Upper lobe of right lung (tissue), 1 donor: ENCODE measurements at regions of chr4 and their contacts with region 1.

Region 1: GRCh38 chr4:118981839-118982381 is 93.3 kb downstream of the SYNPO2 start:
- DNase-seq: no peak
- ATAC-seq: peak; percentile 96
- H3K4me3 ChIP-seq: no peak overlapping the region
- H3K27ac ChIP-seq: no peak overlapping the region
- H3K4me1 ChIP-seq: no peaks in the 10 kb centered on the region
- H3K27me3 ChIP-seq: no peaks in the 10 kb centered on the region
- CTCF ChIP-seq: peak; percentile 76

Region 2: DNA sequence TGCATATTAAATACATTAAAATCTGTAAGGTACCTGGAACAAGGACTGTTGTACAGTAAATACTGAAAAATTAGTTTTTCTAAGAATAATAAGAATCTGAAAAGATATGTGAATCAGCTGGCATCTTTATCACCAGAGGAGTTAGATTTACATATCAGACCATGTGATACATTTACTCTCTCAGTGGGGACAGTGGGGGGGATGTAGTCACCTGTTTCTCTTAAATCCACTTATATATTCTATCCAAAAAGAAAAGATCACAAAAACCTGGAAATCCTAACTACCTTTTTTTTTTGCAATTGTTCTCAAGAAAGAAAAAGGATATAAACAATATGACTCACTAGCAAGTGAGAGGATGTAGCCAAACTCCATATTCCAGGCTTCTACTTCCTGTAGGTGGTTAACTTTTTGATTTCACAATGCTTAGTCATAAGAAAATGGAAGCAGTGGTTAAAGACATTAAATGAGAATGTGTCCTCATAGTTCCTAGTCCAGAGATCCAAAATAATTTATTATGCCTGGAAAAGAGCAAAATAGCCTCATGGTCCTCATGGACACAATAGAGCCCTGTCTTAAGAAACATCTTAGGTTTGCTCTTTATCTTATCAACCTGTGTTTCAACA is 131.2 kb after region 1 on chr4:
- intact Hi-C with region 1: no loop called
- DNase-seq: no peak
- ATAC-seq: peak; percentile 79
- H3K4me3 ChIP-seq: no peak overlapping the region
- H3K27ac ChIP-seq: peak overlapping the region; percentile 26
- H3K4me1 ChIP-seq: peaks cover 9% of the 10 kb centered on the region
- H3K27me3 ChIP-seq: no peaks in the 10 kb centered on the region
- CTCF ChIP-seq: no peak

Region 3: DNA sequence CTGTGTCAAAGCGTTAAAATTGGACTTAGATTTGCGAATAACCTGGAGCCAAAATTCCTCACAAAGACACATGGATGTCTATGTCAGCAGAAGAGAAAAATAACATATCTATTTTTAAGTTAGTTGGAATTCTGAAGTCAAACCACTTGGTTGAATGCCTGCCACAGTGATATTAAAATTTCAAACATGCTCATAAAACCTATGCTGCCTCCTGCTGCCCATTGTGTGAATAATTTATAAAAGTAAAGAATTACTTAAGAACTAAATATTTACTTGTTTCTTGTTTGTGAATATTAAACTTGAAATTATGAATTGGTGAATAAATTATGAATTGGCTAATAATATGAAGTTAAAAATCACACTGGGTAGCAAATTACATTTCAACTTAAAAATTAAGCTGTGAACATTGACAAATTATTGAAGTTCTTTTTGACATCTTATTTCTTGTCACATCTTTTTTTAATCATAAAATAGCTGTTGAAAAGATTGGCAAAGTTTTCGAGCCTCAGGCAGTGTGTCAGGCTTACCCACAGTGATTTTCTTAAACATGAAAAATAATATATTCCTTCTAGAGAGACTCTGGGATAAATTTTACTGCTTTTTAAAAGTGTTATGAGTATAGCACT is 304.6 kb after region 1 on chr4:
- intact Hi-C with region 1: loop called (anchors 10 kb)
- DNase-seq: no peak
- ATAC-seq: peak; percentile 58
- H3K4me3 ChIP-seq: no peak overlapping the region
- H3K27ac ChIP-seq: no peak overlapping the region
- H3K4me1 ChIP-seq: peaks cover 34% of the 10 kb centered on the region
- H3K27me3 ChIP-seq: no peaks in the 10 kb centered on the region
- CTCF ChIP-seq: peak; percentile 72

Region 4: GRCh38 chr4:119765936-119766335 is 784.0 kb after region 1 on chr4:
- intact Hi-C with region 1: no loop called
- DNase-seq: no peak
- ATAC-seq: no peak
- H3K4me3 ChIP-seq: no peak overlapping the region
- H3K27ac ChIP-seq: no peak overlapping the region
- H3K4me1 ChIP-seq: no peaks in the 10 kb centered on the region
- H3K27me3 ChIP-seq: no peaks in the 10 kb centered on the region
- CTCF ChIP-seq: no peak